Endothelial cell of umbilical vein (primary cell): ENCODE measurements at regions of chr1 and their contacts with region 1.

Region 1: GRCh38 chr1:116724765-116725375 is 29.4 kb upstream of the CD2 start:
- DNase-seq: peak; percentile 47
- H3K4me3 ChIP-seq: no peak overlapping the region
- H3K27ac ChIP-seq: no peak overlapping the region
- H3K4me1 ChIP-seq: peaks cover 8% of the 10 kb centered on the region
- H3K27me3 ChIP-seq: peaks cover 3 to 8% of the 10 kb centered on the region in 2 experiments
- CTCF ChIP-seq: peak; percentile 62 to 69
- POLR2A ChIP-seq: no peak

Region 2: GRCh38 chr1:116817582-116818064 is 92.8 kb after region 1 on chr1:
- CTCF ChIA-PET with region 1: interaction called, 8 read pairs
- POLR2A ChIA-PET with region 1: no interaction called
- dilution Hi-C with region 1: no loop called
- intact Hi-C with region 1: loop called (anchors 1 kb)
- DNase-seq: peak; percentile 54
- H3K4me3 ChIP-seq: no peak overlapping the region
- H3K27ac ChIP-seq: no peak overlapping the region
- H3K4me1 ChIP-seq: no peaks in the 10 kb centered on the region
- H3K27me3 ChIP-seq: peaks cover 0 to 7% of the 10 kb centered on the region in 2 experiments
- CTCF ChIP-seq: peak; percentile 66 to 73
- POLR2A ChIP-seq: no peak